ENCODE measurements at regions of chr19 and their contacts with region 1.

Region 1: DNA sequence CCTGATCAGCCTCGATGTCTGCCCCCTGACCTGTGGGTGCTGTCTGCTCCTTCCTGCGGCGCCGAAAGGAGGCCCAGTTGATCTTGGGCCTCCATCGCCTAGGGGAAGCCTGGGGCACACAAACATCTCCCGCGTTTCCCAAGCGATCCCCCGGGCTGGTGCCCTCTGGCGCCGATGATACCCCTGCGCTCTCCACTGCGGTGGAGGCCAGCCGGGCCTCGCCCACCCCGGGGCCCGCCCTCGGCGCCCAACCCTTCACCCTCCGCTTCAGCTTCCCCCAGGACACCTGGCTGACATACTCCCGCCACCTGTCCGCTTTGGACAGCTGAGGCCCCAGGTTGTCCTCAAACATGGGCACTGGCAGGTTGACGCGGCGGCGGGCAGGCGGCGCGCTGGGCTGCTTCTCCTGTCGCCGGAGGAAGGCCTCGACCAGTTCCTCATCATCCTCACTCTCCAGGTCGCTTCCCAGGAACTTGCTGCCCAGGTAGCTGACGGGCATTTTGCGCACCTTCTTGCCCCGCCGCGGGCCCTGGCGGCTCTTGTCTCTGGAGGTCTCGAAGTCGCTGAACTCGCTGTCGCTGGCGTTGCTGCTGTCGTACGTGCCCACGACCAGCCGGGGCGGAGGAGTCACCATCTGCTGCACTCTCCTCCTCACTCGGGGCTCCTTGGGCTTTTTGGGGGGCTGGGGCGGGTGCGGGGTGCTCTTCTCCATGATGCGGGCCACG is 1.3 kb downstream of the CCDC8 start:
- DNase-seq: no peak

Region 2: DNA sequence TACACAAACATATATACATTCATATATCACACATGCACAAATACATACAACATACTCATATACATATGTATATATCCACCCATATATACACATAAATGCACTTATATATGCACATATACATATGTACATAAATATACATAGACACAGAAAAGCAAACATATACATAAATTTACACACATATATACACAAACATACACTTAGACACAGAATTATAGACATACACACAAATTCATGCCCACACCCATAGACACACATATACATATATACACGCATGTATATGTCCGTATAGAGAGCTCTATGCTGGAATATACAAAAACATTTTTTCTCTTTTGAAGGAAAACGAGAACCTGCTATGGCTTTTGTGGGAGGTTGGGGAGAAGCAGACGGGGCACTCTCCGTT is 38.6 kb after region 1 on chr19:
- intact Hi-C with region 1: loop called in 1 of 2 experiments (anchors 1 kb)
- DNase-seq: no peak